Sigmoid colon (tissue), 7 donors: ENCODE measurements at regions of chr6 and their contacts with region 1.

Region 1: DNA sequence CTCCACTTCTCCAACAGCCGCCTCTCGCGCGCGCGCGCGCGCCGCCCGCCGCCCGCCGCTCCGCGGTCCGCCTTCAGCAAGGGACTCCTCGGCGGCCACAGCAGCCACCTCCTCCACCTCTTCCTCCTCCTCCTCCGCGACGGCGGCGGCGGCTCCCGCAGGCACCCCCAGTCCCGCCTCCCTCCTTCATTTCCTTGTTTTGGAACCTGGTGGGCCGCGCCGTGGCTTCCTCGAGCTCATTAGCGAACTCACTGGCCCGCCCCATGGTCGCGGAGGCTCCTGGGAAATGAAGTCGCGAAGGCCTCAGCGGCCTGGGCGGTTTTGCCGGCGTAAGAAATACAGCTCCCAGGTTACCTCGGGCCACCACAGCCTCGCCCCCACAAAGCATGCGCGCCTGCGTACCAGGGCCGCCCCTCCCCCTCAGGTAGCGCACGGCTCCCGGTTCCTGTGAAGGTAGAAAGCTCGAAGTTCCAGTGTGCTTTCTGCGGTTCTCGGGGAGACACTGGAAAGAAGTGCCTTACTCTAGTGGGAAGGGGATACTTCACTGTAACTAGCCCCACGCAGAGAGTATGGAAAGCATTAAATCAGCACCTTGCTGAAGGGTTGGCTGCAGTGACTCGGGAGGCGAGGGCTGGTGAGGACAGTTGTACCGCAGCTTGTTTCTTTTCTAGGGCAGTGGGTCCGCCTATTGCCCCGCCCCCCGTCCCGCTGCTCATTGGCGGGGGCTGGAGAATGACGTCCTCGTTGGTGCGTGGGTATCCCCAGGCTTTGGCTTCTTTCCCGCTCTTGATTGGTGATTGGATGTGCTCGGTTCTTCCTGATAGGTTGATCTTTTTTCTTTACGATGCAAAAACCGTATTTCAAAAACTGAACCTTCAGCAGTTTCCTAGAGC is at the start of gene CDK19:
- DNase-seq: peak; percentile 99
- H3K4me3 ChIP-seq: peak within 1 kb of the TSS; percentile 73 to 91 (median 88)
- H3K27ac ChIP-seq: peak within 1 kb of the TSS; percentile 89 to 99 (median 97)
- H3K4me1 ChIP-seq: peaks cover 0 to 13% (median 6%) of the 10 kb centered on the region in 4 donors
- H3K27me3 ChIP-seq: no peaks in the 10 kb centered on the region
- CTCF ChIP-seq: no peak
- EP300 ChIP-seq: peak in 1 of 4 donors; percentile 63
- POLR2A ChIP-seq: peak in 1 of 2 donors; percentile 68
- total RNA-seq, gene CDK19: 12.1 to 17.8 (median 14.5) TPM

Region 2: GRCh38 chr6:110179401-110180227 is 635.8 kb before region 1 on chr6 and contains the start of gene WASF1:
- intact Hi-C with region 1: loop called (anchors 10 kb)
- DNase-seq: peak; percentile 97
- H3K4me3 ChIP-seq: peak within 1 kb of the TSS; percentile 65 to 83 (median 78)
- H3K27ac ChIP-seq: peak within 1 kb of the TSS; percentile 83 to 92 (median 89)
- H3K4me1 ChIP-seq: peaks cover 0 to 51% (median 35%) of the 10 kb centered on the region in 4 donors
- H3K27me3 ChIP-seq: no peaks in the 10 kb centered on the region
- CTCF ChIP-seq: no peak
- EP300 ChIP-seq: no peak
- POLR2A ChIP-seq: no peak
- total RNA-seq, gene WASF1: 10.2 to 34.9 (median 19.5) TPM

Region 3: GRCh38 chr6:110958329-110959192 is 143.1 kb after region 1 on chr6 and contains the start of gene GTF3C6:
- intact Hi-C with region 1: loop called (anchors 2 kb)
- DNase-seq: peak; percentile 96
- H3K4me3 ChIP-seq: peak within 1 kb of the TSS; percentile 51 to 98 (median 76)
- H3K27ac ChIP-seq: peak within 1 kb of the TSS; percentile 88 to 96 (median 90)
- H3K4me1 ChIP-seq: peaks cover 0 to 17% (median 12%) of the 10 kb centered on the region in 4 donors
- H3K27me3 ChIP-seq: no peaks in the 10 kb centered on the region
- CTCF ChIP-seq: no peak
- EP300 ChIP-seq: no peak
- POLR2A ChIP-seq: peak; percentile 49 to 55
- total RNA-seq, gene GTF3C6: 41.0 to 59.9 (median 47.9) TPM

Region 4: DNA sequence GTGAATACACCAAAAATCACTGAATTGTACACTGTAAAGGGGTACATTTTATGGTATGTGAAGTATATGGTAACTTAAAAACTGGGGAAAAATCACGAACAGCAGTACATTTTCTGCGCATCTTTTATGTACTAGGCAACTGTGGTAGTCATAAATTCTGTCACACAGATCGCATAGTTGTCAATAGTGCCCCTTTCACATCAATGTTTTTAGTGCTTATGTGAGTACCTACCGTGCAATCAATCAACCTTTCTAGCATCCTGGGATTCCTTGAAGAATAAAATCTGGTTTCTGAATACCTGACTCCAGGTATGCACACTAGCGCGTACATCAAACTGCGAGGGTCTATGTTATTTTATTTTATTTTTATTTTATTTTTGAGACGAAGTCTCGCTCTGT is 165.7 kb after region 1 on chr6:
- intact Hi-C with region 1: loop called (anchors 2 kb)
- DNase-seq: no peak
- H3K4me3 ChIP-seq: peak overlapping the region; percentile 78 to 94 (median 86)
- H3K27ac ChIP-seq: peak overlapping the region; percentile 86 to 93 (median 88)
- H3K4me1 ChIP-seq: peaks cover 0 to 12% (median 10%) of the 10 kb centered on the region in 4 donors
- H3K27me3 ChIP-seq: no peaks in the 10 kb centered on the region
- CTCF ChIP-seq: no peak
- EP300 ChIP-seq: no peak
- POLR2A ChIP-seq: no peak